ENCODE measurements at regions of chr11 and their contacts with region 1.

Region 1: GRCh38 chr11:83724008-83724461 is 437.9 kb upstream of the CCDC90B start:
- DNase-seq: peak; percentile 11 to 53 (median 19)
- ATAC-seq: peak; percentile 85
- H3K4me3 ChIP-seq: no peak overlapping the region
- H3K27ac ChIP-seq: no peak overlapping the region
- H3K4me1 ChIP-seq: no peaks in the 10 kb centered on the region; a peak in 1 of 5 replicates
- H3K27me3 ChIP-seq: no peaks in the 10 kb centered on the region
- CTCF ChIP-seq: peak; percentile 24 to 65 (median 33); a peak in 3 of 6 replicates
- EP300 ChIP-seq: no peak
- POLR2A ChIP-seq: no peak
- RAD21 ChIP-seq: peak; percentile 67

Region 2: DNA sequence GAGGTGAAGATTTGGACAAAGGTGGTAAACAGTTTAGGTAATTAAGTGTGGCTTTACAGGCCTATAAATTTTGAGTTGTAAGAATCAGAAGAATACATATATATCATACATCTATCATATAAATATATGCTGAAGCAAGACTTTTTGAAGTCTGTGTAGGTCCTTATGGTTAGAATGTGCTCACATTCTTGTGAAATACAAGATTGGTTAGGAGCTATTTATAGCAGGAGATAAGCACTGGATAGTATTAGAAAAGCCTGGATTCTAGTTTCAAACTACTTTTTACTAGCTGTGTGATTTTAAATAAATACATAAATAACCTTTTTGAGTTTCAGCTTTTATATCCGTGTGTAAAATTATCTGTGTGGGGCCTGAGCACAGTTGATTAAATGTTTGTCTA is 488.2 kb before region 1 on chr11:
- CTCF ChIA-PET with region 1: no interaction called
- POLR2A ChIA-PET with region 1: no interaction called
- in situ Hi-C with region 1: no loop called
- intact Hi-C with region 1: loop called (anchors 10 kb)
- DNase-seq: no peak
- ATAC-seq: no peak
- H3K4me3 ChIP-seq: no peak overlapping the region
- H3K27ac ChIP-seq: no peak overlapping the region
- H3K4me1 ChIP-seq: no peaks in the 10 kb centered on the region
- H3K27me3 ChIP-seq: no peaks in the 10 kb centered on the region
- CTCF ChIP-seq: no peak
- EP300 ChIP-seq: no peak
- POLR2A ChIP-seq: no peak
- RAD21 ChIP-seq: no peak

Region 3: DNA sequence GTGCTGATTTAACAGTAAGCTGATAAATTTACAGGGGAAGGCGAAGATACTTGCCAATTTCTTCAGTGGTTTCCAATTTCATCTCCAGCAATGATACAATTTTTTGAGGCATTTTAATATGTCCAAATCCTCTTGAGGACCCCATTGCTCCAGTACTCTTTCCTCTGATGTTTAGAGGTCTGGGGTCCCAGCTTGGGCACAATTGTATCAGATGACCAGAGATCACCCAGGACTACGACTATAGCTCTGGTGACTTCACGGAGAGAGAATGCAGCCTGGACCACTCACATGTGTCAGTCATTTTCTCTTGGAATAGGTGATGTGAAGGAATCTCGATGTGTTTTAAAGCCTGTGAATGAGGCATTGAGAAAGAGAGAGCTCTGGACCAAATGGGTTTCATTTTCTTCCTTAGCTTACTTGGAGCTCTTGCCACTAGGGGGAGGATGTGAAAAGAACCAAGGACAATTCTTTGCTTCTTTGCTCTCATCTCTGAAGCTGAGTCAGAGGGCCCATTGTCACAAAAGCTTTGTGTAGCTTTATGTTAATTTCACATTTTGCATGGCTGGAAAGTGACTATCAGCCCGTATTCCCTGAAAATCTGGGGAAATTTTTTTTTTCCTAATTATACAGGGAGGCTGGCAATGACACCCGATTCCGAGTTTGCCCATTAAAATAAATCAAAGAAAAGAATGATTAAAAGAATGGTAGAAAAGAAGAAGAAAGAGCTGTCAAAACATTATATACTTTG is 431.2 kb before region 1 on chr11:
- CTCF ChIA-PET with region 1: interaction called, 3 read pairs
- POLR2A ChIA-PET with region 1: no interaction called
- in situ Hi-C with region 1: no loop called
- intact Hi-C with region 1: loop called (anchors 5 kb)
- DNase-seq: peak; percentile 35 to 67 (median 45)
- ATAC-seq: peak; percentile 85
- H3K4me3 ChIP-seq: no peak overlapping the region
- H3K27ac ChIP-seq: no peak overlapping the region
- H3K4me1 ChIP-seq: no peaks in the 10 kb centered on the region; a peak in 1 of 5 replicates
- H3K27me3 ChIP-seq: peaks cover 0 to 5% of the 10 kb centered on the region in 2 experiments; a peak in 4 of 5 replicates
- CTCF ChIP-seq: peak; percentile 57 to 74 (median 64)
- EP300 ChIP-seq: no peak
- POLR2A ChIP-seq: no peak
- RAD21 ChIP-seq: peak; percentile 46 to 55